Gastrocnemius medialis (tissue), 4 donors: ENCODE measurements at regions of chr4 and their contacts with region 1.

Region 1: GRCh38 chr4:78056265-78057129 is 626 bp upstream of the FRAS1 start:
- DNase-seq: peak; percentile 72 to 83
- ATAC-seq: peak; percentile 73 to 76
- H3K4me3 ChIP-seq: peak overlapping the region; percentile 75 to 84 (median 82)
- H3K27ac ChIP-seq: peak overlapping the region; percentile 84 to 94 (median 92)
- H3K4me1 ChIP-seq: peaks cover 0 to 11% of the 10 kb centered on the region in 2 donors
- H3K27me3 ChIP-seq: no peaks in the 10 kb centered on the region
- CTCF ChIP-seq: peak in 1 of 5 experiments; percentile 15
- POLR2A ChIP-seq: peak; percentile 16 to 35

Region 2: GRCh38 chr4:77862478-77863216 is 193.8 kb before region 1 on chr4 and contains the start of gene MRPL1:
- in situ Hi-C with region 1: no loop called
- intact Hi-C with region 1: loop called (anchors 2 kb)
- DNase-seq: peak; percentile 85 to 89
- ATAC-seq: peak; percentile 96 to 97
- H3K4me3 ChIP-seq: peak within 1 kb of the TSS; percentile 59 to 86 (median 76)
- H3K27ac ChIP-seq: peak within 1 kb of the TSS; percentile 82 to 94 (median 88)
- H3K4me1 ChIP-seq: peaks cover 11 to 12% of the 10 kb centered on the region in 2 donors
- H3K27me3 ChIP-seq: no peaks in the 10 kb centered on the region
- CTCF ChIP-seq: peak in 2 of 5 experiments; percentile 4 to 38
- POLR2A ChIP-seq: peak; percentile 17 to 65
- total RNA-seq, gene MRPL1: 29.2 to 52.0 (median 31.5) TPM

Region 3: GRCh38 chr4:78121338-78121904 is 64.9 kb after region 1 on chr4:
- in situ Hi-C with region 1: no loop called
- intact Hi-C with region 1: loop called (anchors 2 kb)
- DNase-seq: peak; percentile 48 to 69
- ATAC-seq: peak; percentile 87 to 98
- H3K4me3 ChIP-seq: no peak overlapping the region
- H3K27ac ChIP-seq: peak overlapping the region; percentile 7 to 81 (median 56)
- H3K4me1 ChIP-seq: peaks cover 0 to 7% of the 10 kb centered on the region in 2 donors
- H3K27me3 ChIP-seq: no peaks in the 10 kb centered on the region
- CTCF ChIP-seq: no peak
- POLR2A ChIP-seq: no peak

Region 4: DNA sequence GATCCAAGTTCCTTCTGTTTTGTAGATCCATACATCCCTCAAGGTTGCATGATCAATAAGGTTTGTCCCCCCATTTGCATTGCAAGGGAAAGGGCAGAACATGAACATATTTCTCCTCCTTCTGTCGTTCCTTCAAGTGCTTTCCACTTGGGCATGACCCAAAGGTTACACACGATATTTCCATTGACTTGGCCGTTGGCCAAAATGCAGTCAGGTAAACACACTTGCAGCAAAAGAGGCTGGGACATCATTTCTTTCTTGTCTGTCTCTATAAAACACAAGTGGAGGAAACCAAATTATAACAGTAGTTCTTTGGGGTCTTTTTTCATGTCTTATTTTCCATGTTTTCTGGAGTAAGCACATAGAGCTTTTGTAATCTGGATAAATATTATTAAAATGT is 156.7 kb after region 1 on chr4:
- in situ Hi-C with region 1: no loop called
- intact Hi-C with region 1: no loop called
- DNase-seq: no peak
- ATAC-seq: no peak
- H3K4me3 ChIP-seq: no peak overlapping the region
- H3K27ac ChIP-seq: no peak overlapping the region
- H3K4me1 ChIP-seq: no peaks in the 10 kb centered on the region
- H3K27me3 ChIP-seq: no peaks in the 10 kb centered on the region
- CTCF ChIP-seq: no peak
- POLR2A ChIP-seq: no peak

Region 5: GRCh38 chr4:78293821-78294301 is 237.4 kb after region 1 on chr4:
- in situ Hi-C with region 1: no loop called
- intact Hi-C with region 1: loop called (anchors 5 kb)
- DNase-seq: no peak
- ATAC-seq: no peak
- H3K4me3 ChIP-seq: no peak overlapping the region
- H3K27ac ChIP-seq: no peak overlapping the region
- H3K4me1 ChIP-seq: peaks cover 8 to 14% of the 10 kb centered on the region in 2 donors
- H3K27me3 ChIP-seq: no peaks in the 10 kb centered on the region
- CTCF ChIP-seq: no peak
- POLR2A ChIP-seq: no peak